ENCODE measurements at regions of chr5 and their contacts with region 1.

Region 1: DNA sequence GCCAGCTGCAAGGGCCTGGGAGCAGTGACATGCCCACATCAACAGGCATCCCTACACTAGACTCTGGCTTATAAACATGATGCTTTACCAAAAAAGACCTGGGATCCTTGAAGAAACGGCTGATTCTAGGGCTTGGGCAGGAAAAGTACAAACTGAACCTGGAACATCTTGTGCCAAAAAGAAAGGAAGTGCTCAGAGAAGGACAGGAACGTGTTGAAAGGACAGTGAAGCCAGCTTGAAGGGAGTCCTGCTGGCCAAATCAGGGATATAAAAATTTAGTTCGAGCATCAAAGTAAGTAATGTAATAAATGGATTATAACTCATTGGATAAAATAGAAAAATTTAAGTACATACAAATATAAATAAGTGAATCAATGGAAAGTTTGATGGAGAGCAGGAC is 58.1 kb downstream of the ALDH7A1 start:
- DNase-seq: no peak
- H3K4me3 ChIP-seq: no peak overlapping the region
- H3K27ac ChIP-seq: peak overlapping the region; percentile 3 to 47
- H3K4me1 ChIP-seq: peaks cover 3% of the 10 kb centered on the region
- H3K27me3 ChIP-seq: no peaks in the 10 kb centered on the region
- CTCF ChIP-seq: peak in 2 of 4 experiments; percentile 11 to 19
- POLR2A ChIP-seq: no peak

Region 2: DNA sequence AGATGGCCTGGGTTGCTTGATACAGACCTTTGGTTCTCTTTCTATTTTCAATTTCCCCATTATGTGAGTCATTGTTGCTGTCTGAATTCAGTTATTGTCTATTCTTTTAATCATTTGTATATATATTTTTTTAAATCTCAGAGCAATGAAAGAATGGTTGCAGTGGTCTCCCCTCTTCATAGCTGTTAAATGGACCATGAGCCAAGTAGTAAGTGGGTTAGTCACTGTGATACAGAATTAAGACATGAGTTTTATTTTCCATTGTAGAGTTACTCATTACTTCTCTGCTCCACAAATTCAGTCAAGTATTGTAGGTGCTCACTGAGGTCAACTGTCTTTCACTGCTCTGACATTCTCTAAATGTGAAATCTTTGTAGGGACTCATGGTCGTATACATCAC is 288.3 kb before region 1 on chr5:
- intact Hi-C with region 1: no loop called
- DNase-seq: no peak
- H3K4me3 ChIP-seq: no peak overlapping the region
- H3K27ac ChIP-seq: no peak overlapping the region
- H3K4me1 ChIP-seq: no peaks in the 10 kb centered on the region
- H3K27me3 ChIP-seq: no peaks in the 10 kb centered on the region
- CTCF ChIP-seq: no peak
- POLR2A ChIP-seq: no peak

Region 3: GRCh38 chr5:126354012-126354857 is 182.6 kb before region 1 on chr5:
- intact Hi-C with region 1: loop called (anchors 2 kb)
- DNase-seq: no peak
- H3K4me3 ChIP-seq: no peak overlapping the region
- H3K27ac ChIP-seq: peak overlapping the region; percentile 77 to 81
- H3K4me1 ChIP-seq: no peaks in the 10 kb centered on the region
- H3K27me3 ChIP-seq: no peaks in the 10 kb centered on the region
- CTCF ChIP-seq: peak in 3 of 4 experiments; percentile 60 to 82 (median 69)
- POLR2A ChIP-seq: no peak

Region 4: GRCh38 chr5:126438267-126438666 is 98.6 kb before region 1 on chr5:
- intact Hi-C with region 1: loop called (anchors 5 kb)
- DNase-seq: no peak
- H3K4me3 ChIP-seq: no peak overlapping the region
- H3K27ac ChIP-seq: no peak overlapping the region
- H3K4me1 ChIP-seq: peaks cover 2% of the 10 kb centered on the region
- H3K27me3 ChIP-seq: no peaks in the 10 kb centered on the region
- CTCF ChIP-seq: no peak
- POLR2A ChIP-seq: no peak

Region 5: DNA sequence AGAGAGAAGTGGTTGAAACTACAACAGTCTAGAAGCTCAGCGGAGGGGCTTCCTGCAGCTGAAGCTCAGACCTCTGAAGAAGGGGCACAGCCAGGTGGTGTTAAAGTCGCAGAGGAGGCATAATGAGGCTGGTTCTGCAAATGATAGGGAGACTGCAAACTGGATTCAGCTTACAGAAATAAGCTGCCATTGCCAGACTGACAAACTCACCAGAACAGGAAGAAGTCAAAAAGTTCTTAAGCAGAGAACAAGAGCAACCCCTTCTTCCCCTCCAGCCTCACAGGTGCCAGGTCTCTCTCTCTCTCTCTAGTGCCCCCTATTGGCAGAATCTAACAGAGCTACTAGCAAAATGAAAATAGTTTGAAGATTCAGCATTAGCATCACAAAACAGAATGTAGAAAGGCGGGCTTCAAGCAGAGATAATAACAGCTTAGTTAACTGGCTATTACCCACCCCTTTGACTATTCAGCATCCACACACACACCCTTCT is 37.0 kb before region 1 on chr5:
- intact Hi-C with region 1: loop called (anchors 5 kb)
- DNase-seq: no peak
- H3K4me3 ChIP-seq: no peak overlapping the region
- H3K27ac ChIP-seq: peak overlapping the region in 1 of 2 donors; percentile 15
- H3K4me1 ChIP-seq: peaks cover 5% of the 10 kb centered on the region
- H3K27me3 ChIP-seq: no peaks in the 10 kb centered on the region
- CTCF ChIP-seq: peak in 3 of 4 experiments; percentile 35 to 36 (median 36)
- POLR2A ChIP-seq: no peak

Measured in prostate gland (tissue), 2 donors.